ENCODE measurements at regions of chr13 and their contacts with region 1.

Region 1: DNA sequence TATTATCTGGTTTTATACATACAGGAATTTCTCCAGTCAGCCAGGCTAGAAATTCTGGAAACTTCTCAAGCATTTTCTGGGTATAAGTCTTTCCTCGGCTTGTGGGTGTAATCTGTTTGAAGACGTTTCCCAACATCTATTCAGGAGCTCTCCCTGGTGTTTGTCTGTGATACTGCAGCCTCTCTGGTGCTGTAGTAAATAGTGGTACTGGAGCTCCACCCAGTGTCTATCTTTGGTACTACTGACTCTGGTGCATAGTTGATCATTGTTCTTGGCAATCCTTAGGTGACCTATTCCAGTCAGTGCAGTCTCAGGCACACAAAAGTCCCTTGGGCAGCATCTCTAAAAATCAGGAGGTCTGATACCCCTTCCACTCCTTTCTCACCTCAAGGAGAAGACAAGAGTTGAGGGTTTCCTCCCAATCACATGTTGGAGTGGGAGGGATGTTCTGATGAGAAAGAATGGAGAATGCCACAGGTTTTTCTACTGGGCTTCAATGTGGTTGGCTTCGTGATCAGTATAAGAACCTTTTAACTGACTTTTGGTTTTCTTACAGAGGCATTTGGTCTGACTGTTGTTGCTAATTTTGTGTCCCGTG is 115.5 kb downstream of the CYSLTR2 start:
- DNase-seq: peak; percentile 89
- ATAC-seq: peak; percentile 96
- H3K4me3 Mint-ChIP-seq: no peak overlapping the region
- H3K27ac Mint-ChIP-seq: no peak overlapping the region
- H3K4me1 Mint-ChIP-seq: peaks cover 19% of the 10 kb centered on the region
- H3K27me3 Mint-ChIP-seq: peaks cover 22% of the 10 kb centered on the region

Region 2: DNA sequence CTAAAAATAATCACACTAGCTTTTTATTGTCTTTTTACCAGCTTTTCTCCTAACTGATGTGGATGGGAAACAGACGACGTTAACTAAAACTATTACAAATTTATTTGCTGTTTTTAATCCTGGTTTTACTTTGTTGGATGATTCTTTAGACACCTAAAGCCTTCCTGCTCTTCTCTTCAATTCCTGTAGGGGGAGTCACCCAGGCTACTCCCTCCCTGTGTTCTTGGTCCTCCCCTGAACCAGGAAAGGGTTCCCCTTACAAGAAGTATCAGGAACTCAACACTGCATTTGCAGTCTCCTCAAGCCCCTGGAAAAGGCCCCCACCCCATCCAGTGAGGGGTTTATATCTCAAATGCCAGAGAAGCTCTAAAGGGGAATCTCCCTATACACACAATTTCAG is 974.2 kb before region 1 on chr13:
- CTCF ChIA-PET with region 1: no interaction called
- POLR2A ChIA-PET with region 1: no interaction called
- intact Hi-C with region 1: loop called in 1 of 2 experiments (anchors 5 kb)
- DNase-seq: no peak
- ATAC-seq: no peak
- H3K4me3 Mint-ChIP-seq: no peak overlapping the region
- H3K27ac Mint-ChIP-seq: no peak overlapping the region
- H3K4me1 Mint-ChIP-seq: no peaks in the 10 kb centered on the region
- H3K27me3 Mint-ChIP-seq: peaks cover 3% of the 10 kb centered on the region

Region 3: GRCh38 chr13:48334534-48335127 is 434.6 kb before region 1 on chr13:
- CTCF ChIA-PET with region 1: interaction called, 32 read pairs
- POLR2A ChIA-PET with region 1: no interaction called
- intact Hi-C with region 1: loop called (anchors 1 kb)
- DNase-seq: no peak
- ATAC-seq: no peak
- H3K4me3 Mint-ChIP-seq: no peak overlapping the region
- H3K27ac Mint-ChIP-seq: no peak overlapping the region
- H3K4me1 Mint-ChIP-seq: peaks cover 7% of the 10 kb centered on the region
- H3K27me3 Mint-ChIP-seq: no peaks in the 10 kb centered on the region

Region 4: GRCh38 chr13:48580185-48580803 is 188.9 kb before region 1 on chr13:
- CTCF ChIA-PET with region 1: interaction called, 28 read pairs
- POLR2A ChIA-PET with region 1: no interaction called
- intact Hi-C with region 1: no loop called
- DNase-seq: peak; percentile 81
- ATAC-seq: no peak
- H3K4me3 Mint-ChIP-seq: no peak overlapping the region
- H3K27ac Mint-ChIP-seq: no peak overlapping the region
- H3K4me1 Mint-ChIP-seq: no peaks in the 10 kb centered on the region
- H3K27me3 Mint-ChIP-seq: peaks cover 16% of the 10 kb centered on the region

Region 5: DNA sequence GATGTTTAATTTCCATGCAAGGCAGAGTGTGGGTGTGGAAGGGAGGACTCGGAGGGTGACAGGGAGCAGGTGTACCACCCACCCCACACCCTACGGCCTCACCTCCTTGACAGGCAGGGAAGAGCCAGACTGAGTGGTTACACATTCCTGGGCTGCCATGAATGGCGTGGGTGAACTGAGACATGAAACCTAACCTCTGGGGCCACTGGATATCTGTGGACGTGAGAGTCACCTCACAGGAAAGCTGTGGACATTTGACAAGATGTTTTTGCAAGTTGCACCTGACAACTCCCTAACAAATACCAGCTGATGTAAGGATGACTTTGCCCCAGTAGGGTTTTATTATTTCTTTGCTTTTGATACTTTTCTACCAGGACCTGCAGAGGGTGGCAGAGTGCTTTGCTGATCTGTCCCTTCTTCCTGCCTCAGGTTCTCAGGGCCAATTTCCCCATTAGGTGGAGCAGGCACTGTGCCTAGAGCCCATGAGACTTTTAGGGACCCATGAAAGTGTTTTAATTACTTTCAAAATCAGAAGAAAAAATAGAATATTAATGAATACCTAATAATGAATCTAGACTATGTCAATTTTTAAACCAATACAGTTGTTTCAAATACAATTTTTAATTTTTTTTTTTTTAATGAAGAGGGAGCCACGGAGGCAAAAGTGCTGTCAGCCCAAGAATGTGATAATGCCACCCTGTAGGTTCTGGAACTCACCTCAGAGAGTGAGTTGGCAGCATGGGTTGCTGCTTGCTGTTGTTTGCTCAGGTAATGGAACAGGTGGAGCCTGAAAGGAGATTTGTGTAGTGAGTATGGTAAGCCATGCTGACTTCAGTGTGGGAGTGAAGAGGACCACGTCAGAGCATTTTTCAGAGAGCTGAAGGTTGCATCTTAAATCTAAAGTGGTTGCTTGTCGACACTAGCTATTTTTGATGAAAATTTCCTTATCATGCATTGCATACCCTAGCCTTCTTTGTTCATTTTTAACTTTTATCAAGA is 173.5 kb before region 1 on chr13:
- CTCF ChIA-PET with region 1: interaction called, 51 read pairs
- POLR2A ChIA-PET with region 1: interaction called, 5 read pairs
- intact Hi-C with region 1: loop called (anchors 1 kb)
- DNase-seq: peak; percentile 71
- ATAC-seq: peak; percentile 87
- H3K4me3 Mint-ChIP-seq: no peak overlapping the region
- H3K27ac Mint-ChIP-seq: no peak overlapping the region
- H3K4me1 Mint-ChIP-seq: peaks cover 6% of the 10 kb centered on the region
- H3K27me3 Mint-ChIP-seq: peaks cover 3% of the 10 kb centered on the region

Region 6: DNA sequence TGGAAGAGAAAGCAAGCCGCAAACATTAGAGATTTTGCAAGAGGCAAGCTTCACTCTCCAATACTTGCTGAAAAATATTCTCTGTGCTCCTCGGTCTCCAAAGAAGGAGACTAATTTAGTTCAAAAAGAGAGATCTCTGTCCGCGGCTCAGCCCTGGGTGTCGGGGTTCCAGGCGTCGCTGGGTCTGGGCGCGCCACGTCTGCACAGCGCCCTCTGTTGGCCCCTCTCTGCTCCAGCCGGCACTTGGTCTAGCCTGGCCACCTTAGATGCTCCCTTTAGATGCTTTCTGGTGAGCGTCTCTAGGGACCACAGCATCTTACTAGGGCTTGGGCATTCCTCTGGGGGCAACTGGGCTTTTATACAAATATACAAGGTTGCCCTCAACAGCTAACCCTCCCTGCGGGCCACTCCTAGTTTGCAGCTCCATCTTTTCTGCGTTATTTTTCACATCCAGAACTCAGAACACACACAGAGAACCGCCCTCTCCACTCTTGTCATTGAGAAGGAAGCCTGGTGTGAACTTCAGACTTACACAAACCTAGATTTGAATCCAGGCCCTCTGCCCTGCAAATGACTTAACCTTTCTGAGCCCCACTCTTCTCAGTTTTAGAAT is 37.1 kb before region 1 on chr13:
- CTCF ChIA-PET with region 1: interaction called, 13 read pairs
- POLR2A ChIA-PET with region 1: no interaction called
- intact Hi-C with region 1: loop called (anchors 1 kb)
- DNase-seq: peak; percentile 80
- ATAC-seq: peak; percentile 81
- H3K4me3 Mint-ChIP-seq: peak overlapping the region; percentile 37
- H3K27ac Mint-ChIP-seq: no peak overlapping the region
- H3K4me1 Mint-ChIP-seq: peaks cover 14% of the 10 kb centered on the region
- H3K27me3 Mint-ChIP-seq: no peaks in the 10 kb centered on the region

Measured in activated CD4-positive, alpha-beta T cell treated with anti-CD3 and anti-CD28 coated beads for 36 hours (primary cell).